ENCODE measurements at regions of chr1 and their contacts with region 1.

Region 1: GRCh38 chr1:180116964-180117763 is 37.5 kb upstream of the QSOX1 start:
- DNase-seq: peak in 1 of 2 donors; percentile 15
- ATAC-seq: peak; percentile 21 to 88 (median 72)
- H3K4me3 ChIP-seq: no peak overlapping the region
- H3K27ac ChIP-seq: peak overlapping the region in 2 of 10 donors; percentile 2 to 24
- H3K4me1 ChIP-seq: peaks cover 5 to 45% (median 31%) of the 10 kb centered on the region in 9 donors
- H3K27me3 ChIP-seq: no peaks in the 10 kb centered on the region
- CTCF ChIP-seq: no peak

Region 2: DNA sequence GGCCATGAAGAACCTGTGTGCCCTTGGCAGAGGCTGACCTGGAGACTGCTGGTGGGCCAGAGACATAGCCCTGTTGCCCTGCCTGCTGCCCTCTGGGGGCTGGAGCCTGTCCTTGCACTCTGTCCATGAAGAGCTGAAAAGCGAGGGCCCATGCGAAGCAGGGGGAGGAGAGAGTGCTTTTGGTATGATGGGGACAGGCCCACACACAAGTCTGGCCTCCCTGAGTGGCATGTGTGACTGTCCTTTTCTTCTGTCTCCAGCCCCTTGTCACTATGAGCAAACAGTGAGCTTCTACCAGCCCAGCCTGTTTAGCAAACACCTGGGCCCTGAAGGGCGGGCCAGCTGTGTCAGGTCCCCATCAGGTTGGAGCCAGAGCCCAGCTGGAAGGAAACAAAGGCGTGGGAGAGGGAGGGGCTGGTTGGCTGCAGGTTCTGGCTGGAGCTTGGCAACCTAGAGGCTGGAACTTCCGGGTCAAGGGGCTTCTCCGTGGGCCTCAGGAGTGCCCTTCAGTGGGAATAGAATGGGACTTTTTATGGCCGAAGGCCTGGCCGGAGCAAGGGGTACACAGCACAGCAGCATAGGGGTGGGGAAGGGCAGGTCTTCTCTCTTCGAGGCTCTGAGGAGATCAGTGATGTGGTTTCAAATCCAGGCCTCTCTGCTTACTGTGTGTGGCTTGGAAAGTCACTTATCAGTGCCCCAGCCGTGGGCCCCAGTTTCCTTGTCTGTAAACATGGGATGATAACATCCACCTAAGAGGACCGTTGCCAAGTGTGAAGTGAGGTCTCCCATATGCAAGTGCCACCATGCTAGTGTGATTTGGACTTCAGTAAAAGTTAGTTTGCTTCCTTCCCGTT is 51.8 kb after region 1 on chr1:
- intact Hi-C with region 1: loop called in 6 of 10 experiments (anchors 2 to 10 kb)
- DNase-seq: no peak
- ATAC-seq: peak in 6 of 8 donors; percentile 49 to 64 (median 60)
- H3K4me3 ChIP-seq: no peak overlapping the region
- H3K27ac ChIP-seq: peak overlapping the region in 3 of 10 donors; percentile 77 to 84 (median 77)
- H3K4me1 ChIP-seq: peaks cover 10 to 59% (median 51%) of the 10 kb centered on the region in 9 donors
- H3K27me3 ChIP-seq: no peaks in the 10 kb centered on the region
- CTCF ChIP-seq: peak in 8 of 9 donors; percentile 25 to 64 (median 50)